ENCODE measurements at regions of chr22 and their contacts with region 1.

Region 1: GRCh38 chr22:37309211-37310074 is 27.1 kb downstream of the CYTH4 start:
- DNase-seq: peak; percentile 61 to 72 (median 67)
- H3K4me3 ChIP-seq: peak overlapping the region; percentile 49 to 54
- H3K4me3 Mint-ChIP-seq: peak overlapping the region; percentile 79 to 90 (median 82)
- H3K27ac ChIP-seq: peak overlapping the region; percentile 59
- H3K27ac Mint-ChIP-seq: peak overlapping the region; percentile 70 to 100 (median 92)
- H3K4me1 ChIP-seq: peaks cover 78% of the 10 kb centered on the region
- H3K4me1 Mint-ChIP-seq: peaks cover 56 to 94% (median 70%) of the 10 kb centered on the region in 4 donors
- H3K27me3 ChIP-seq: no peaks in the 10 kb centered on the region
- H3K27me3 Mint-ChIP-seq: no peaks in the 10 kb centered on the region

Region 2: GRCh38 chr22:37229805-37230672 is 79.4 kb before region 1 on chr22:
- CTCF ChIA-PET with region 1: no interaction called
- POLR2A ChIA-PET with region 1: interaction called, 24 read pairs
- intact Hi-C with region 1: no loop called
- DNase-seq: peak; percentile 87 to 97 (median 88)
- H3K4me3 ChIP-seq: peak overlapping the region; percentile 48 to 51
- H3K4me3 Mint-ChIP-seq: peak overlapping the region; percentile 75 to 88 (median 82)
- H3K27ac ChIP-seq: peak overlapping the region; percentile 97
- H3K27ac Mint-ChIP-seq: peak overlapping the region; percentile 87 to 100 (median 100)
- H3K4me1 ChIP-seq: peaks cover 96% of the 10 kb centered on the region
- H3K4me1 Mint-ChIP-seq: peaks cover 67 to 92% (median 83%) of the 10 kb centered on the region in 4 donors
- H3K27me3 ChIP-seq: no peaks in the 10 kb centered on the region
- H3K27me3 Mint-ChIP-seq: no peaks in the 10 kb centered on the region

Region 3: GRCh38 chr22:37295213-37295886 is 14.1 kb before region 1 on chr22:
- CTCF ChIA-PET with region 1: interaction called, 6 read pairs
- POLR2A ChIA-PET with region 1: interaction called, 44 read pairs
- intact Hi-C with region 1: no loop called
- DNase-seq: peak in 1 of 5 donors; percentile 35
- H3K4me3 ChIP-seq: no peak overlapping the region
- H3K4me3 Mint-ChIP-seq: peak overlapping the region in 2 of 8 donors; percentile 40 to 47
- H3K27ac ChIP-seq: no peak overlapping the region
- H3K27ac Mint-ChIP-seq: peak overlapping the region; percentile 19 to 84 (median 69)
- H3K4me1 ChIP-seq: peaks cover 68% of the 10 kb centered on the region
- H3K4me1 Mint-ChIP-seq: peaks cover 26 to 81% (median 58%) of the 10 kb centered on the region in 4 donors
- H3K27me3 ChIP-seq: no peaks in the 10 kb centered on the region
- H3K27me3 Mint-ChIP-seq: no peaks in the 10 kb centered on the region

Region 4: GRCh38 chr22:37383341-37383740 is 73.9 kb after region 1 on chr22:
- CTCF ChIA-PET with region 1: no interaction called
- POLR2A ChIA-PET with region 1: no interaction called
- intact Hi-C with region 1: no loop called
- DNase-seq: no peak
- H3K4me3 ChIP-seq: no peak overlapping the region
- H3K4me3 Mint-ChIP-seq: no peak overlapping the region
- H3K27ac ChIP-seq: no peak overlapping the region
- H3K27ac Mint-ChIP-seq: peak overlapping the region in 1 of 7 donors; percentile 47
- H3K4me1 ChIP-seq: no peaks in the 10 kb centered on the region
- H3K4me1 Mint-ChIP-seq: no peaks in the 10 kb centered on the region
- H3K27me3 ChIP-seq: no peaks in the 10 kb centered on the region
- H3K27me3 Mint-ChIP-seq: peaks cover 6 to 21% of the 10 kb centered on the region in 2 donors

Region 5: GRCh38 chr22:37457093-37457893 is 147.8 kb after region 1 on chr22:
- CTCF ChIA-PET with region 1: interaction called, 38 read pairs
- POLR2A ChIA-PET with region 1: no interaction called
- intact Hi-C with region 1: no loop called
- DNase-seq: peak; percentile 74 to 80 (median 77)
- H3K4me3 ChIP-seq: no peak overlapping the region
- H3K4me3 Mint-ChIP-seq: no peak overlapping the region
- H3K27ac ChIP-seq: no peak overlapping the region
- H3K27ac Mint-ChIP-seq: peak overlapping the region in 6 of 7 donors; percentile 15 to 57 (median 22)
- H3K4me1 ChIP-seq: peaks cover 3% of the 10 kb centered on the region
- H3K4me1 Mint-ChIP-seq: peaks cover 0 to 7% (median 5%) of the 10 kb centered on the region in 4 donors
- H3K27me3 ChIP-seq: no peaks in the 10 kb centered on the region
- H3K27me3 Mint-ChIP-seq: no peaks in the 10 kb centered on the region

Region 6: DNA sequence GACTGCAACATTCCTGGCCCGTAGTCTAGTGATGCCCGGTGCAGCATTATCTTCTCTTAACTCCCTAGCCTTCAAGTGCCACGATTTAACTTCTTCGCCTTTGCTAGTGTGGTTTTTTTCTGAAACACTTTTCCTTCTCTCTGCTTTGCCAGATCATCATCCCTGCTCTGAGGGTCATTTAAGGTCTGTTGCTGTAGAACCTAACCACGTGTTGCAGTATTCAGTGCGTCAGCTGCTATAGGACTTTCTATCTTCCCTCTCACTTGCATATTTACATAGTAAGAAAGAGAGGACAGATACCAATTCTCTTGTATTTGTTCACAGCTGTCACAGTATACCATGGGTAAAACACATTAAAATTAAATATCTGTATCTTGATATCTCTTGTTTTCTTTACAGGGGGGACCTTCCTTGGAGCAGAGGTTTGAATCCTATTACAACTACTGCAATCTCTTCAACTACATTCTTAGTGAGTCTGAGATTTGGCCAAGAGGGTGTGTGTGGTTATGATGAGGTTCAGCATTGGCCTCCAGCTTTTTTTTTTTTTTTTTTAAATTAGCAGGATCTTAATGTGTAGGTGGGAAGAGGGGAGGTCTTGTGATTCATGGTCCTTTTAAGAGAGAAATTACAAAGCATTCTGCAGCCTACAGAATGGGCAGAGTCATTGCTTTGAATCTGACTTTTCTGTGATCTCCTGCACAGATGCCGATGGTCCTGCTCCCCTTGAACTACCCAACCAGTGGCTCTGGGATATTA is 553.3 kb after region 1 on chr22:
- CTCF ChIA-PET with region 1: no interaction called
- POLR2A ChIA-PET with region 1: no interaction called
- intact Hi-C with region 1: no loop called
- DNase-seq: no peak
- H3K4me3 ChIP-seq: no peak overlapping the region
- H3K4me3 Mint-ChIP-seq: no peak overlapping the region
- H3K27ac ChIP-seq: no peak overlapping the region
- H3K27ac Mint-ChIP-seq: peak overlapping the region in 3 of 7 donors; percentile 38 to 74 (median 53)
- H3K4me1 ChIP-seq: peaks cover 5% of the 10 kb centered on the region
- H3K4me1 Mint-ChIP-seq: peaks cover 2 to 5% (median 4%) of the 10 kb centered on the region in 4 donors
- H3K27me3 ChIP-seq: no peaks in the 10 kb centered on the region
- H3K27me3 Mint-ChIP-seq: no peaks in the 10 kb centered on the region

Measured in CD4-positive, alpha-beta memory T cell (primary cell).